ENCODE measurements at regions of chr2 and their contacts with region 1.

Region 1: GRCh38 chr2:64330281-64331113 is 123.5 kb upstream of the LGALSL start:
- DNase-seq: peak; percentile 64 to 83 (median 73)
- H3K4me3 ChIP-seq: no peak overlapping the region
- H3K4me3 Mint-ChIP-seq: peak overlapping the region; percentile 1 to 75 (median 37)
- H3K27ac ChIP-seq: no peak overlapping the region
- H3K27ac Mint-ChIP-seq: peak overlapping the region in 6 of 8 donors; percentile 5 to 94 (median 78)
- H3K4me1 ChIP-seq: peaks cover 40% of the 10 kb centered on the region
- H3K4me1 Mint-ChIP-seq: peaks cover 32 to 37% (median 35%) of the 10 kb centered on the region in 3 donors
- H3K27me3 ChIP-seq: no peaks in the 10 kb centered on the region
- H3K27me3 Mint-ChIP-seq: peaks cover 0 to 1% of the 10 kb centered on the region in 2 donors

Region 2: GRCh38 chr2:64318476-64318748 is 12.1 kb before region 1 on chr2:
- CTCF ChIA-PET with region 1: interaction called, 16 read pairs
- POLR2A ChIA-PET with region 1: no interaction called
- DNase-seq: no peak
- H3K4me3 ChIP-seq: no peak overlapping the region
- H3K4me3 Mint-ChIP-seq: no peak overlapping the region
- H3K27ac ChIP-seq: no peak overlapping the region
- H3K27ac Mint-ChIP-seq: no peak overlapping the region
- H3K4me1 ChIP-seq: no peaks in the 10 kb centered on the region
- H3K4me1 Mint-ChIP-seq: peaks cover 0 to 7% (median 0%) of the 10 kb centered on the region in 3 donors
- H3K27me3 ChIP-seq: no peaks in the 10 kb centered on the region
- H3K27me3 Mint-ChIP-seq: no peaks in the 10 kb centered on the region

Region 3: GRCh38 chr2:64488050-64488974 is 157.8 kb after region 1 on chr2:
- CTCF ChIA-PET with region 1: interaction called, 184 read pairs
- POLR2A ChIA-PET with region 1: interaction called, 4 read pairs
- DNase-seq: peak; percentile 47 to 80 (median 64)
- H3K4me3 ChIP-seq: no peak overlapping the region
- H3K4me3 Mint-ChIP-seq: no peak overlapping the region
- H3K27ac ChIP-seq: no peak overlapping the region
- H3K27ac Mint-ChIP-seq: peak overlapping the region in 1 of 8 donors; percentile 45
- H3K4me1 ChIP-seq: peaks cover 4% of the 10 kb centered on the region
- H3K4me1 Mint-ChIP-seq: peaks cover 2 to 16% (median 11%) of the 10 kb centered on the region in 3 donors
- H3K27me3 ChIP-seq: no peaks in the 10 kb centered on the region
- H3K27me3 Mint-ChIP-seq: peaks cover 3 to 24% of the 10 kb centered on the region in 2 donors

Region 4: GRCh38 chr2:64543008-64543697 is 212.7 kb after region 1 on chr2:
- CTCF ChIA-PET with region 1: no interaction called
- POLR2A ChIA-PET with region 1: no interaction called
- DNase-seq: no peak
- H3K4me3 ChIP-seq: no peak overlapping the region
- H3K4me3 Mint-ChIP-seq: no peak overlapping the region
- H3K27ac ChIP-seq: no peak overlapping the region
- H3K27ac Mint-ChIP-seq: peak overlapping the region in 2 of 8 donors; percentile 27 to 35
- H3K4me1 ChIP-seq: peaks cover 5% of the 10 kb centered on the region
- H3K4me1 Mint-ChIP-seq: peaks cover 55 to 72% (median 65%) of the 10 kb centered on the region in 3 donors
- H3K27me3 ChIP-seq: no peaks in the 10 kb centered on the region
- H3K27me3 Mint-ChIP-seq: no peaks in the 10 kb centered on the region

Region 5: GRCh38 chr2:64865073-64865830 is 534.8 kb after region 1 on chr2:
- CTCF ChIA-PET with region 1: interaction called, 12 read pairs
- POLR2A ChIA-PET with region 1: no interaction called
- DNase-seq: peak; percentile 48 to 74 (median 70)
- H3K4me3 ChIP-seq: peak overlapping the region; percentile 63
- H3K4me3 Mint-ChIP-seq: peak overlapping the region in 5 of 7 donors; percentile 74 to 91 (median 79)
- H3K27ac ChIP-seq: no peak overlapping the region
- H3K27ac Mint-ChIP-seq: peak overlapping the region in 3 of 8 donors; percentile 71 to 80 (median 74)
- H3K4me1 ChIP-seq: peaks cover 8% of the 10 kb centered on the region
- H3K4me1 Mint-ChIP-seq: peaks cover 0 to 4% (median 0%) of the 10 kb centered on the region in 3 donors
- H3K27me3 ChIP-seq: no peaks in the 10 kb centered on the region
- H3K27me3 Mint-ChIP-seq: peaks cover 7% of the 10 kb centered on the region in 2 donors

Measured in CD8-positive, alpha-beta memory T cell (primary cell).